Activated CD4-positive, alpha-beta memory T cell treated with anti-CD3 and anti-CD28 coated beads for 36 hours (primary cell): ENCODE measurements at regions of chr4 and their contacts with region 1.

Region 1: GRCh38 chr4:10554694-10555093 is 97.5 kb upstream of the ZNF518B start:
- DNase-seq: peak; percentile 36
- H3K4me3 Mint-ChIP-seq: no peak overlapping the region
- H3K27ac Mint-ChIP-seq: no peak overlapping the region
- H3K4me1 Mint-ChIP-seq: peaks cover 2% of the 10 kb centered on the region
- H3K27me3 Mint-ChIP-seq: peaks cover 15% of the 10 kb centered on the region

Region 2: GRCh38 chr4:10157478-10158332 is 397.0 kb before region 1 on chr4:
- CTCF ChIA-PET with region 1: interaction called, 26 read pairs
- POLR2A ChIA-PET with region 1: no interaction called
- intact Hi-C with region 1: no loop called
- DNase-seq: peak; percentile 62
- H3K4me3 Mint-ChIP-seq: no peak overlapping the region
- H3K27ac Mint-ChIP-seq: no peak overlapping the region
- H3K4me1 Mint-ChIP-seq: peaks cover 29% of the 10 kb centered on the region
- H3K27me3 Mint-ChIP-seq: no peaks in the 10 kb centered on the region

Region 3: GRCh38 chr4:10245751-10246150 is 308.9 kb before region 1 on chr4:
- CTCF ChIA-PET with region 1: no interaction called
- POLR2A ChIA-PET with region 1: no interaction called
- intact Hi-C with region 1: no loop called
- DNase-seq: no peak
- H3K4me3 Mint-ChIP-seq: no peak overlapping the region
- H3K27ac Mint-ChIP-seq: no peak overlapping the region
- H3K4me1 Mint-ChIP-seq: no peaks in the 10 kb centered on the region
- H3K27me3 Mint-ChIP-seq: peaks cover 7% of the 10 kb centered on the region

Region 4: GRCh38 chr4:10461091-10461849 is 93.4 kb before region 1 on chr4:
- CTCF ChIA-PET with region 1: interaction called, 7 read pairs
- POLR2A ChIA-PET with region 1: no interaction called
- intact Hi-C with region 1: loop called (anchors 1 kb)
- DNase-seq: peak; percentile 78
- H3K4me3 Mint-ChIP-seq: peak overlapping the region; percentile 72
- H3K27ac Mint-ChIP-seq: no peak overlapping the region
- H3K4me1 Mint-ChIP-seq: peaks cover 25% of the 10 kb centered on the region
- H3K27me3 Mint-ChIP-seq: peaks cover 33% of the 10 kb centered on the region

Region 5: GRCh38 chr4:10478621-10479020 is 76.1 kb before region 1 on chr4:
- CTCF ChIA-PET with region 1: no interaction called
- POLR2A ChIA-PET with region 1: no interaction called
- intact Hi-C with region 1: no loop called
- DNase-seq: no peak
- H3K4me3 Mint-ChIP-seq: no peak overlapping the region
- H3K27ac Mint-ChIP-seq: no peak overlapping the region
- H3K4me1 Mint-ChIP-seq: no peaks in the 10 kb centered on the region
- H3K27me3 Mint-ChIP-seq: peaks cover 3% of the 10 kb centered on the region

Region 6: DNA sequence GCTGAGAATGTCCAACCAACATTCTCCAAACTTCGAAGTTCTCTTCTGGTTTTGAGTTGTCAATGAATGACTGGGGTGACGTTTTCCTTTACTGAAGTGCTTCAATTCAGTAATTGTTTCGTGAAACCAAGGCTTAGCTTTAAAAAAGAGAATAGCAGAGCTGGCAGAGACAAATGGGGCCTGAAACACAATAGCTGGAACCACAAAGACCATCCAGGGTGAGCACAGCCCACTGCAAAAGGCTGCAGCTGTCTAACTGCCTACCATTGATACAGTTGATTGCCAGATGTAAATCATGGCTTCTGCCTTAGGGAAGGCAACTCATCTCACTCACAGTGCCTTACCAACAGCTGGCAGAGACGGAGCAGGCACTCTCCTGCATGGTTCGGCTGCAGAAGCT is 18.8 kb before region 1 on chr4:
- CTCF ChIA-PET with region 1: interaction called, 15 read pairs
- POLR2A ChIA-PET with region 1: no interaction called
- intact Hi-C with region 1: no loop called
- DNase-seq: no peak
- H3K4me3 Mint-ChIP-seq: no peak overlapping the region
- H3K27ac Mint-ChIP-seq: no peak overlapping the region
- H3K4me1 Mint-ChIP-seq: no peaks in the 10 kb centered on the region
- H3K27me3 Mint-ChIP-seq: peaks cover 2% of the 10 kb centered on the region

Region 7: DNA sequence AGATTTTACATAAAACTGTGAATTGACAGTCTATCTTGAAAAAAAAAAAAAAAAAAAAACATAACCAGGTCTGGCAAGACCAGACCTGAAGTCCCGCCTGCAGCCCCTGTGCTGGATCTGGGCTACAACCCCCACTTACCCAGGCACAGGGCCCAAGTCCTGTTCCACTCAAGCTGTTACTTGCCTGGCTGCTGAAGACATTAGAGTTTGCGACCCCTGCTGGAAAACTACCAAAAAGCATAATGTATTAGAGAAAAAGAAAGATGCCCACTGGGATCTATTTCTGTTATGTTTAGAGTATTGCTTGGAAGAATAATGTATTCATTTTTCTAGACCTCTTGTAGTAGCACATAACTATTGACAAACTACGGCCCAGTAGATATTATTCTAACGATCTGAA is 869.3 kb after region 1 on chr4:
- CTCF ChIA-PET with region 1: interaction called, 3 read pairs
- POLR2A ChIA-PET with region 1: no interaction called
- intact Hi-C with region 1: loop called (anchors 2 kb)
- DNase-seq: no peak
- H3K4me3 Mint-ChIP-seq: no peak overlapping the region
- H3K27ac Mint-ChIP-seq: no peak overlapping the region
- H3K4me1 Mint-ChIP-seq: peaks cover 12% of the 10 kb centered on the region
- H3K27me3 Mint-ChIP-seq: peaks cover 25% of the 10 kb centered on the region